SK-N-SH (cell line): ENCODE measurements at regions of chr3 and their contacts with region 1.

Region 1: DNA sequence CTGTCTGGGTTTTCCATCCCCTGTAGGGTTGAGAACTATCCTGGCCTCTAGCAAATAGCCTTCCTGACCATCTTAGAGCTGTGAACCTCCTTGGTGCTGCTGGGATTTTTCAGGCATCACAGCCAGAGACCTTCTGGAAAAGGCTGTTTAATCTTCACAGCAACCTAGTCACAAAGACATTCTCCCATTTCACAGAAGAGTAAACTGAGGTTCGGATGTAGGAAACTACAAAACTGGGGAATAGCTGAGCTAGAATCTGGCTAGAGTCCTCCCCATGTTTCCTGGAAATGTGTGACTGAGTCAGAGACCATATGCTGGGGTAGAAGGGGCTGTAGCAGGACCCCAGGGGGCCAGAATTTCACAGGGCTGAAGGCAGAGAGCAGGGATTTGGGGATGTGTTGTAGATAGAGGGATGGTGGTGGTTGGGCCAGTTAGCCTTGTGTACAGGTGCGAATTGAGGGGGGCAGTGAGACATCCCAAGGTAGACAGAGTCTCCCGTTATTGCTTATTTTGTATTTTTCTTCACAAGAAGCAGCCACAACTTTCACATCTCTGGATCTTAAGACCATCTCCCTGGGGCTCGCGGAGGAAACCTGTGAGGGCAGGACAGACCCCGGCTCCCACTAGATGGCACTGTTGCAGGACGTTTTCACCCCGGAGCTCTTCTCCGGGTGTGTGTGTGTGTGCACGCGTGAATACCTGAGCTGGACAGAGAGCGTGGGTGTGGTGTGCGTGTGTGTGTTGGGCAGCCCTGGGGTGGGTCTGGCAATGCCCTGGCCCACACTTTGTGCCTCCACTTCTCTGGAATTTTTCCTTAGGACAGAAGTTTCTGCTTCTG is 66.9 kb upstream of the PRR23C start:
- DNase-seq: peak; percentile 69
- H3K4me3 ChIP-seq: peak overlapping the region in 1 of 2 experiments; percentile 11; a peak in 1 of 4 replicates
- H3K27ac ChIP-seq: no peak overlapping the region
- H3K4me1 ChIP-seq: no peaks in the 10 kb centered on the region
- H3K27me3 ChIP-seq: peaks cover 19% of the 10 kb centered on the region
- CTCF ChIP-seq: peak; percentile 85
- EP300 ChIP-seq: no peak
- RAD21 ChIP-seq: peak; percentile 79

Region 2: GRCh38 chr3:138912237-138912636 is 199.4 kb before region 1 on chr3:
- CTCF ChIA-PET with region 1: no interaction called
- POLR2A ChIA-PET with region 1: no interaction called
- DNase-seq: no peak
- H3K4me3 ChIP-seq: no peak overlapping the region
- H3K27ac ChIP-seq: no peak overlapping the region
- H3K4me1 ChIP-seq: peaks cover 0 to 3% of the 10 kb centered on the region in 2 experiments; a peak in 1 of 4 replicates
- H3K27me3 ChIP-seq: no peaks in the 10 kb centered on the region
- CTCF ChIP-seq: no peak
- EP300 ChIP-seq: no peak
- RAD21 ChIP-seq: no peak

Region 3: DNA sequence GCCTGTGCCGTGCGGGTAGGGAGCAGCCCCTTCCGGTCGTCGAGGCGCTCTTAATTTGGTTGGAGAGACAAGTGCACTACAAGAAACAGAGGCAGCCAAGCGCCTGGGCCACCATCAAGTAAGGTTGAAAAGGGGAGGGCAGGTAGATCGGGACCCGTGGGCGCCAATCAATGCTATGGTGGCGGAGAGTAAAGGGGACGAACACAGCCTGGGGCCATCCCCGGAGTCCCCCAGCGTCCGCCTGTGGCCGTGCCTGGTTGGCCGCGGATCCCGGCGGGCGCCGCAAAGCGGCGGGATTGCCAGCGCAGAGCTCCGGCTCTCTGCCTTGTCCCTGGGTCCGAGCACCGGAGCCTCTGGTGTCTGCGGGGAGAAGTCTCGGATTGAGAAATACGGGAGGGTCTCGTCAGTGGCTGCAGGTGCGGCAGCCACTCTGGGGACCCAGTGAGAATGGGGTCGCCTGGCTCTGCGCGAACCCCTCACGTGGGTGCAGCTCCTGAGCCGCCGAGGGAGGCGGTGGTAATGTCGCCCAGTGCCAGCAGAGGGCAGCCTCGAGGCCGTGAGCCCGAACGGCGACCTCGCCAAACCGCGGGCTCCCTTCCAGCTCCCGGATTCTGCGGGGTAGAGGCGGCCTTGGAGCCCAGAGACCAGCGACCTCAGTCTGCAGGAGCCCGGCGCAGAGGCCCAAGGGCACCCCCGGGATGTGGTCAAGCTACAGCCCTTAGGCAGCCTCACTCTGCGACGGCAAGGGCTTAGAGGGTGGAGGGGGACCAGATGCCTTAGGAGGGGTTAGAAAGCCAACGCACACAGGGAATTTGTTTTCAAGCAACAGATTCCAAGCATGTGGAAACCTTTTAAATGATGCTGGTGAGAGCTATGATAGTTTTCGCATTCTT is 175.5 kb before region 1 on chr3:
- CTCF ChIA-PET with region 1: interaction called, 12 read pairs
- POLR2A ChIA-PET with region 1: no interaction called
- DNase-seq: peak; percentile 94
- H3K4me3 ChIP-seq: peak overlapping the region; percentile 39 to 52
- H3K27ac ChIP-seq: no peak overlapping the region
- H3K4me1 ChIP-seq: peaks cover 0 to 8% of the 10 kb centered on the region in 2 experiments; a peak in 1 of 4 replicates
- H3K27me3 ChIP-seq: peaks cover 74% of the 10 kb centered on the region
- CTCF ChIP-seq: peak; percentile 77
- EP300 ChIP-seq: no peak
- RAD21 ChIP-seq: peak; percentile 42

Region 4: GRCh38 chr3:139032326-139033002 is 79.1 kb before region 1 on chr3:
- CTCF ChIA-PET with region 1: no interaction called
- POLR2A ChIA-PET with region 1: no interaction called
- DNase-seq: no peak
- H3K4me3 ChIP-seq: no peak overlapping the region
- H3K27ac ChIP-seq: no peak overlapping the region
- H3K4me1 ChIP-seq: no peaks in the 10 kb centered on the region
- H3K27me3 ChIP-seq: no peaks in the 10 kb centered on the region
- CTCF ChIP-seq: no peak
- EP300 ChIP-seq: no peak
- RAD21 ChIP-seq: no peak

Region 5: GRCh38 chr3:139101396-139101795 is 10.2 kb before region 1 on chr3:
- CTCF ChIA-PET with region 1: interaction called, 21 read pairs
- POLR2A ChIA-PET with region 1: no interaction called
- DNase-seq: no peak
- H3K4me3 ChIP-seq: no peak overlapping the region
- H3K27ac ChIP-seq: no peak overlapping the region
- H3K4me1 ChIP-seq: no peaks in the 10 kb centered on the region
- H3K27me3 ChIP-seq: no peaks in the 10 kb centered on the region; the same call in 1 of the 2 replicates
- CTCF ChIP-seq: no peak
- EP300 ChIP-seq: no peak
- RAD21 ChIP-seq: no peak

Region 6: DNA sequence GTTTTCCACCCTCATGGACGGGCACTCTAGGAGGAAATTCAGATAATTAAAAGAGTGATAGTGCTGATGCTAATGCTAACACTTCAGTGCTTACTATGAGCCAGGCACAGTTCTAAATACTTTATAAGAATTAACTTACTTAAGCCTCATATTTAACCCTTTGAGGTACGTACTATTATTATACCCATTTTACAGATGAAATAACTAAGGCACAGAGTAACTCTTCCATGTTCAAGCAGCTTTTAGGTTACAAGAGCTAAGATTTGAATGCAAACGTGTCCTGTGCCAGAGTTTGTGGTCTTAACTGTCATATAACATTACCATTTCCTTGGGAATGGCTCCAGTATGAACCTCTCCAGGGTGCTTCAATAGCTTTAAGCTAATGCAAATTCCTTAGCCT is 47.7 kb after region 1 on chr3:
- CTCF ChIA-PET with region 1: interaction called, 10 read pairs
- POLR2A ChIA-PET with region 1: no interaction called
- DNase-seq: no peak
- H3K4me3 ChIP-seq: no peak overlapping the region
- H3K27ac ChIP-seq: no peak overlapping the region
- H3K4me1 ChIP-seq: no peaks in the 10 kb centered on the region
- H3K27me3 ChIP-seq: no peaks in the 10 kb centered on the region
- CTCF ChIP-seq: no peak
- EP300 ChIP-seq: no peak
- RAD21 ChIP-seq: no peak

Region 7: DNA sequence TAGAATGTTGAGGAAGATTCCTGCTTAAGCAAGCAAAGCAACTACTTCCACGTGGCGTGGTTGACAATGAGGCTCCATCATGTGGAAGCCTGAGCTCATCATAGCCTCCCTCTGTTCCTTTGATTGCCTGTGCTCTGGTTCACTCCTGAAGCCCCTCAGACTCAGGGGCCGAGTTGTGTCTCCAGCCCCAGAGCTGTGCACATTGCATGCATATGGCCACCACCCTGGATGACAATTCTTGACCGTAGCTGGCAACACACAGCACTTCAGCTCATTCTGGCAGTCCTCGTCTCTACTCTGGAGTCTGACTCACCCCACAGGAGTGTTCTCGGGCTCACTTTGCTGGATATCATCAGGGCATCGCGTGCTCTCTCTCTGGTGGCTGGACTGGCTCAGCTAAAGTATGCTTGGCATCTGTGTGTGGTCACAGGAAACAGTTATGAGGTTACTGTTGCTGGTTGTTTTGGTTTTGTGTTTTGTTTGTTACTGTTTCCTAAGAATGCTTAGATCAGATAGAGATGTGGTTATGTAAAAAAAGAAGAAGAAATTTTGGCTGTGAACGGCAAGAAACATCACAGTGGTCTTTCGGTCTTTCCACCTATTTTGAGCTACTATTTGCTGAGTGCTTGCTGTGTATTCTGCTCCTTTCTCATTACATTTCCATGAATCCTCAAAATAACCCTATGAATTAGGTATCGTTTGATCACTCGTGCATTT is 190.6 kb after region 1 on chr3:
- CTCF ChIA-PET with region 1: interaction called, 13 read pairs
- POLR2A ChIA-PET with region 1: no interaction called
- DNase-seq: peak; percentile 33
- H3K4me3 ChIP-seq: no peak overlapping the region
- H3K27ac ChIP-seq: peak overlapping the region; percentile 65 to 87; a peak in 3 of 4 replicates
- H3K4me1 ChIP-seq: peaks cover 5 to 31% of the 10 kb centered on the region in 2 experiments; a peak in 3 of 4 replicates
- H3K27me3 ChIP-seq: no peaks in the 10 kb centered on the region
- CTCF ChIP-seq: no peak
- EP300 ChIP-seq: peak in 1 of 2 experiments; percentile 97; a peak in 2 of 4 replicates
- RAD21 ChIP-seq: no peak

Region 8: DNA sequence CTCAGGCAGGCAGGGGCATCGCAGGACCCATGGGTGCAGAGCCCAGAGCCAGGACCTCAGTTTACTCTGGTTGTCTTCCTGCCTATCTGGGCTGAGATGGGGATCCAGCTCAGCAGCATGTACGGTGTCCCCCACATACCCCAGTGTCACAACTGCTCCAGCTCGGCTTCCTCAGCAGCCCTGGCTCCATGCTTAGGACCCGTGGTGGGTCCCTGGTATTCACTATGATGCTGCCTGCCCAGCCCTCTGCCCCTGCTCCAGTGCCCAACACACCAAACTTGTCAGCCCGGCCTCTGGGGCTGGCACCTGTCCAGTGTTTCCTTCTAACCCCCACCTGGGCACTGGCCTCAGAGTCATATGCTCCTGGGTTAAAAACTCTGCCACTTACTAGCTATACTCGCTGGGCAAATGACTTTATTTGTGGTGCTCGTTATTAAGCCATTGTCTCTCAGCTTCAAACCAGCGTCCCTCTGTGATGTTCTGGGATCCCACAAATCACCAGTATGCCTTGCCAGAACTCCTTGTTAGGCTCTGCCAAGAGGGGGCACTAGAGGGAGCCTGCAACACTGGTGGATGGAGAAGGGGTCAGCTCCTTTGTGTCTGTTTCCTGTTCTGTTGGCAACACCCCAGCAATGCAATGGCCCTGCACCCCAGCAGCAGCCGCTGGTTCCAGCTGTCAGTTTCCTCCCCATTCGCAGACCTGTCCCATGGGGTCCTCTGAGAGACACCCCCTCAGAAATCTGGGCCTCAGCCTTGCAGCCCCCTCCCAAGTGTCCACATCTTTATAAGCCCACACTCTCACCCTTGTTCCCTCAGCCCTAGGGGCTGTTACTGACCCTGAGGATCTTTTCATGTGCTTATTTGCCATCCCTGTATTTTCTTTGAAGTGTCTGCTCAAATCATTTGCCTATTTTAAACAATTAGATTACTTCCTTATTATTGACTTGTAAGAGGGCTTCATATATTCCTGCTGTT is 208.1 kb after region 1 on chr3:
- CTCF ChIA-PET with region 1: interaction called, 78 read pairs
- POLR2A ChIA-PET with region 1: no interaction called
- DNase-seq: peak; percentile 51
- H3K4me3 ChIP-seq: no peak overlapping the region
- H3K27ac ChIP-seq: no peak overlapping the region
- H3K4me1 ChIP-seq: peaks cover 0 to 13% of the 10 kb centered on the region in 2 experiments; a peak in 1 of 4 replicates
- H3K27me3 ChIP-seq: no peaks in the 10 kb centered on the region
- CTCF ChIP-seq: peak; percentile 49
- EP300 ChIP-seq: no peak
- RAD21 ChIP-seq: no peak

Region 9: GRCh38 chr3:139343895-139344856 is 232.6 kb after region 1 on chr3 and contains the start of gene MRPS22:
- CTCF ChIA-PET with region 1: interaction called, 11 read pairs
- POLR2A ChIA-PET with region 1: no interaction called
- DNase-seq: peak; percentile 84
- H3K4me3 ChIP-seq: peak within 1 kb of the TSS; percentile 84 to 98
- H3K27ac ChIP-seq: peak within 1 kb of the TSS; percentile 84 to 89
- H3K4me1 ChIP-seq: peaks cover 7 to 12% of the 10 kb centered on the region in 2 experiments; a peak in 3 of 4 replicates
- H3K27me3 ChIP-seq: no peaks in the 10 kb centered on the region
- CTCF ChIP-seq: no peak
- EP300 ChIP-seq: no peak
- RAD21 ChIP-seq: no peak
- polyA plus RNA-seq, gene MRPS22: 50.6 and 53.0 TPM in 2 replicates

Region 10: GRCh38 chr3:139414608-139415224 is 303.1 kb after region 1 on chr3:
- CTCF ChIA-PET with region 1: no interaction called
- POLR2A ChIA-PET with region 1: no interaction called
- DNase-seq: no peak
- H3K4me3 ChIP-seq: no peak overlapping the region
- H3K27ac ChIP-seq: no peak overlapping the region
- H3K4me1 ChIP-seq: no peaks in the 10 kb centered on the region
- H3K27me3 ChIP-seq: no peaks in the 10 kb centered on the region
- CTCF ChIP-seq: no peak
- EP300 ChIP-seq: no peak
- RAD21 ChIP-seq: no peak